ENCODE measurements at regions of chr19 and their contacts with region 1.

Region 1: DNA sequence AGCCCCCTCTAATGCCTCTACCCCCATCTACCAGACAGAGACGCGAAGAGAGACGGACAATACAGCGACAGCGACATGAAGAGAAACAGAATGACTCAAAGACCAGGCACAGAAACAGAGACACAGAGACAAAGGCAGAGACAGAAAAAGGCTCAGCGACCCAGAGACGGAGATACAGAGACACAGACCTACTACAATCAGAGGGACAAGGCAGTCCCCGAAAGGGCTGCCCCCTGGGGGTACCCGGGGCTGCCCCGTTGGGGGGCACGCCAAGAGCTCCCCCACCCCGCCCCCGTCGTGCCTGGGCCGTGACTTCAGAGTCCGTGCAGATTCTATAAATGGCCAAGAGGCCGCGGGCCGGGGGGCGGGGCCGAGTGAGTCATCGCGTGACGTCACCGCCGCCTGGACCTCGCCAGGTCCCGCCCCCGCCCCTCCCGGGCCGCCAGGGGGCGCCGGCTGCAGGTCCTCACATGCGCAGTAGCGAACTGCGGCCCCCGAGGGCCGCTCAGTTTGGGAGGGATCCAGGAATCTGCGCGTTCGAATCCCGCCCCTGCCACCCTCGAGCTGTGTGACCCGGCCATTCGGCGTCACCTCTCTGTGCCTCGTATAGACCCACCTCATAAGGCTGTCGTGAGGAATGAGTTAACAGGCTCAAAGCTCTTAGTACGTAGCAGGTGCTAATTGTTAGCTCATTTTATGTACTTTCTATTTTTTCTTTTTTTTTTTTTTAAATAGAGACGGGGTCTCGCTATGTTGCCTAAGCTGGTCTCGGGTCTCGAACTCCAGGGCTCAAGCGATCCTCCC is 2.7 kb upstream of the CNN1 start:
- DNase-seq: peak; percentile 60 to 82
- ATAC-seq: peak; percentile 87 to 94
- H3K4me3 ChIP-seq: peak overlapping the region; percentile 45 to 60 (median 49)
- H3K27ac ChIP-seq: peak overlapping the region; percentile 74 to 84 (median 80)
- H3K4me1 ChIP-seq: peaks cover 0 to 3% of the 10 kb centered on the region in 2 donors
- H3K27me3 ChIP-seq: peaks cover 0 to 10% (median 7%) of the 10 kb centered on the region in 3 donors
- CTCF ChIP-seq: peak; percentile 75 to 91 (median 90)
- POLR2A ChIP-seq: peak; percentile 60 to 80

Region 2: DNA sequence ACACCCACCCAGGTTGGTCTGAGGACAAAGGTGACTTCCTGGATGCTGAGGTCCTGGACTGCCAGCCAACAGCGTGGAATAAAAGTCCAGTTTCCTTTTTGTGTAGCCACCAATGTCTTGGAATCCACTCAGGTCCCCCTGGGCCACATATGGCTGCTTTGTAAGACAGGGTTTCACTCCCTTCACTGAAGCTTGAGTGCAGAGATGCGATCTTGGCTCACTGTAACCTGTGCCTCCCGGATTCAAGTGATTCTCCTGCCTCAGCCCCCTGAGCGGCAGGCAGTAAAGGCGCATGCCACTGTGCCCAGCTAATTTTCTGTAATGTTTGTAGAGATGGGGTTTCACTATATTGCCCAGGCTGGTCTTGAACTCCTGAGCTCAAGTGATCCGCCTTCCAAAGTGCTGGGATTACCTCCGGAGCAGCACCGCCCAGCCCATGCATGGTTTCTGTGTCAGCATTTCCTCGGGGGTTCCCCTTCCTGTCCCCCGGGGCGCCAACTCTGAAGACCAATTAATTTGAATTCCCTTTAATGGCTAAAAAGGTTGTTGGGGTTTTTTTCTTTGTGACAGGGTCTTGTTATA is 356.2 kb before region 1 on chr19:
- in situ Hi-C with region 1: no loop called
- intact Hi-C with region 1: no loop called
- DNase-seq: no peak
- ATAC-seq: no peak
- H3K4me3 ChIP-seq: no peak overlapping the region
- H3K27ac ChIP-seq: peak overlapping the region; percentile 43 to 56 (median 51)
- H3K4me1 ChIP-seq: peaks cover 7 to 15% of the 10 kb centered on the region in 2 donors
- H3K27me3 ChIP-seq: no peaks in the 10 kb centered on the region
- CTCF ChIP-seq: no peak
- POLR2A ChIP-seq: no peak

Region 3: DNA sequence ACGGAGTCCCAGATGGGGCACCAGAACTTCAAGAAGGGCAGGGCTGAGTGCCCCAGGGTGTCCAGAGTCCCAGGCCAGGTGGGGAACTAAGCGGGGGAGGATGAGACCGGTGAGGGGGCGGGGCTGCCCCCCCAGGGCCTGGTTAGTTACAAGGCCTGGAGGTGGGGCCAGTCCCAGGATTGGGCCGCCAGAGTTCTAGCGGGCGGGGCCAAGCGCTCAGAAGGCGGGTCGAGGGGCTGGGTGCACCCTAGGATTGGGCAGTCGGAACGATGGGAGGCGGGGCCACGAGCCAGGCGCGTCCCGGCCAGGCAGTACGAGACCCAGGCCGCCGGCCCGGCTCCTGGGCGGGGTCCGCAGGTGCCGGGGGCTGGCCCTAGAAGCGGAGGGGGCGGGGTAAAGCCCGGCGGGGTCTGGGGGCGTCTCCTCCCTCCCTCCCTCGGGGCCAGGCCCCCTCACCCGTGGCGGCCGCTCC is 30.9 kb before region 1 on chr19:
- in situ Hi-C with region 1: no loop called
- intact Hi-C with region 1: no loop called
- DNase-seq: peak; percentile 95 to 97
- ATAC-seq: peak; percentile 91 to 92
- H3K4me3 ChIP-seq: peak overlapping the region; percentile 70 to 99 (median 88)
- H3K27ac ChIP-seq: peak overlapping the region; percentile 83 to 99 (median 97)
- H3K4me1 ChIP-seq: peaks cover 8 to 12% of the 10 kb centered on the region in 2 donors
- H3K27me3 ChIP-seq: no peaks in the 10 kb centered on the region
- CTCF ChIP-seq: no peak
- POLR2A ChIP-seq: no peak

Region 4: DNA sequence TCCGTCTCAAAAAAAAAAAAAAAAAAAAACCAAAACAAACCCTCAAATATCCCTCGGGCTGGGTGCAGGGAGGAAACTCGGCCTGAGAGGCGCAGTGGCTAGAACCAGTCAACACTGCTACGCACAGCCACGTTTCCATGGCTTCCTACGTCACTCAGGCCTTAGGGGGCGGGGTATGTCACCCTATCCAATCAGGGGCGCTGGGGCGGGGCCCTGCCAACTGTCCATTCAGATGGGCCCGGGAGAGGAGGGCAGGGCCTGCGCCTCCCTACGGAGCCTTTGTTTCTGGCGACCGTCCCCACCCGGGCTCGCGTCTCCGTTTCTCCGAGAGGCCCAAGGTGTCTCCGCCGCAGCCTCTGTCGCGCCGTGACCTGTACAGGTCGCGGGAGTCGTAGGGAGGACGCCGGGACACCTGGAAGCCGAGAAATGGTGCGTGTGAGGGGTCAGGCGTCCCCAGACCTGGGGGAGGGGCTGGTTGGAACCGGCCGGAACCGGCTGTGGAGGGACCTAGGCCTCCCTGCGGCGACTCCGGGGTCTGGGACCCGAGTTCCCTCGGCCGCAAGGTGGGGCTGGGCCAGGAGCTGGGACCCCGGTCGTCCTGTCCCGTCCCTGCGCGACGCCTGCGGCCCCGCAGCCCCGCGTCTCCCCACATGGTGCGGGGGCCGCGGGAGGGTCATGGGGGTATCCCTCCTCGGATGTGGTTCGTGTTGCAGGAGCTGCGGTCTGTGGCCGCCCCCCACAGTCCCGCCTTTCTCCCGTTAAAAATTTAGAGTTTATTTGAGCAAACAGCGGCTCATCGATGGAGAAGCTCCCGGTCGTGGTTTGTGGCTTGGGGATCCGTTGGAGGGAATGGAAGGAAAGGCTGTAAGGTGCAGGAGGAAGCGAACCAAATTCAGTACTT is 61.5 kb after region 1 on chr19 and contains the start of gene ZNF627:
- in situ Hi-C with region 1: no loop called
- intact Hi-C with region 1: loop called (anchors 5 kb)
- DNase-seq: peak; percentile 97 to 99
- ATAC-seq: peak; percentile 99
- H3K4me3 ChIP-seq: peak within 1 kb of the TSS; percentile 88 to 99 (median 92)
- H3K27ac ChIP-seq: peak within 1 kb of the TSS; percentile 89 to 95 (median 91)
- H3K4me1 ChIP-seq: peaks cover 9% of the 10 kb centered on the region in 2 donors
- H3K27me3 ChIP-seq: no peaks in the 10 kb centered on the region
- CTCF ChIP-seq: peak in 4 of 5 experiments; percentile 12 to 43 (median 26)
- POLR2A ChIP-seq: peak; percentile 84 to 90
- total RNA-seq, gene ZNF627: 2.3 to 4.5 (median 3.7) TPM

Measured in gastrocnemius medialis (tissue), 4 donors.